Posterior cingulate gyrus (tissue), 11 donors: ENCODE measurements at regions of chr11 and their contacts with region 1.

Region 1: GRCh38 chr11:6389921-6390724 is at the start of gene SMPD1:
- DNase-seq: peak; percentile 87 to 98 (median 92)

Region 2: DNA sequence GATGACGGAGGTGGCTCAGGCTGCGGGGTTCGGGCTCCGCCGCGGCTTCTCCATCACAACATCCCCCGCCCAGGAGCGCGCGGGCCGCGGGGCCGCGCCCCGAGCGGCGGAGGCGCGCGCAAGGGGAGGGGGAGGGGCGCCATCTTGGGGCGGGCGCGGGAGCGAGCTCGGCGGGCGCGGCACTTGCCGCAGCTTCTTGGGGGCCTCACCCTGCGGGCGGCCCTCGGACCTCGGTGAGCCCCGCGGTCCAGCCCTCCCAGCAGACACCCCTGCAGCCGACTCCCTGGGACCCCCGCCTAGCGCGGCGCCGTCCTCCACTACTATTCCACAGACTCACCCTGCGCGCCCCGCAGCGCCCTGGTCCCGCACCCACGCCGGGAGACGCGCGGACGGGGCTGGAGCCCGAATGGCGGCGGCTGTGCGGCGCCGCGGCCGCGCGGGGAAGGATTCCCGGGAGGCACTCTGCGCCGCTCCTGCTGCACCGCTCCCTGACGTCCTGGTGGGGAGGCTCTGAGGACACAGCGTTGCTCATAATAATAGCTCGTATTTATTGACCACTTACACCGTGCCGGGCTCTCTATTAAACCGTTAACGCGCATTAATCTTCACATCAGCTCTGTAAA is 29.0 kb after region 1 on chr11 and contains the start of gene APBB1:
- intact Hi-C with region 1: loop called (anchors 2 kb)
- DNase-seq: peak; percentile 58 to 96 (median 68)

Region 3: GRCh38 chr11:6473481-6474422 is 83.6 kb after region 1 on chr11 and contains the start of gene TRIM3:
- intact Hi-C with region 1: loop called (anchors 1 kb)
- DNase-seq: peak; percentile 83 to 98 (median 92)

Region 4: DNA sequence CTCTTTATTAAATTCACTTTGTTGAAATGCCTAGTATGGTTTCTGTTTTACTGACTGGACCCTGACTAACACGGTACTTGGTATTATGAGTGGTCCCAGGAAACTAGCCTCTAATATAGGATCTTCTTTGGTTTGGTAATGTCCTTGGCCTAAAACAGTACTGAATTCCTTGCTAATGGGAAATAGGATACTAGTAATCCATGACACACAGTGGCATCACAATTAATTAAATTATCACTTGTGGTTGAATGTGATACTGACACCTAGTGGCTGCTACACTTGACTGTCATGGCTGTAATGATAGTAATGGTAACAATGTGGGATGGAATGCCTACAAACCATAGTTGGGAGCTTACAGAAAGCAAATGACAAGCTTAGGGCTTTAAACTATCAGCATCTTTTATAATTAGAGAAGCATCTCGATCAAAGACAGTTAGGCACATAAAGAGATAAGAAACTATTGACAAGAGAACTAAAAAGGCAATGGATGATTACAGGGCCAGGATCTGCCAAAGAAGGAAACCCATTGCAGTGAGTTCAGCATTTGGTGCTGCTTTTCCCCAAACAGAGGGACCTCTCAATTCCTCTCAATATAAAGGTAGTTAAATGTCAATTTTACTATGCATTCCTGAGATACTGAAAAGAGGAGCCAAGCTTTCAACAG is 115.6 kb after region 1 on chr11:
- intact Hi-C with region 1: loop called (anchors 10 kb)
- DNase-seq: no peak

Region 5: GRCh38 chr11:6603287-6604080 is 213.4 kb after region 1 on chr11 and contains the starts of genes ILK and RRP8:
- intact Hi-C with region 1: loop called (anchors 5 kb)
- DNase-seq: peak; percentile 88 to 98 (median 91)

Region 6: GRCh38 chr11:7246179-7246578 is 856.1 kb after region 1 on chr11:
- intact Hi-C with region 1: loop called (anchors 10 kb)
- DNase-seq: no peak